ENCODE measurements at regions of chr10 and their contacts with region 1.

Region 1: GRCh38 chr10:103921750-103922195 is 3.8 kb upstream of the STN1 start:
- DNase-seq: no peak
- ATAC-seq: no peak
- H3K4me3 ChIP-seq: no peak overlapping the region
- H3K27ac ChIP-seq: no peak overlapping the region
- H3K4me1 ChIP-seq: peaks cover 13% of the 10 kb centered on the region
- H3K27me3 ChIP-seq: no peaks in the 10 kb centered on the region
- CTCF ChIP-seq: no peak

Region 2: GRCh38 chr10:103960103-103960502 is 38.3 kb after region 1 on chr10:
- intact Hi-C with region 1: loop called (anchors 2 kb)
- DNase-seq: no peak
- ATAC-seq: no peak
- H3K4me3 ChIP-seq: no peak overlapping the region
- H3K27ac ChIP-seq: no peak overlapping the region
- H3K4me1 ChIP-seq: peaks cover 14% of the 10 kb centered on the region
- H3K27me3 ChIP-seq: no peaks in the 10 kb centered on the region
- CTCF ChIP-seq: no peak

Region 3: DNA sequence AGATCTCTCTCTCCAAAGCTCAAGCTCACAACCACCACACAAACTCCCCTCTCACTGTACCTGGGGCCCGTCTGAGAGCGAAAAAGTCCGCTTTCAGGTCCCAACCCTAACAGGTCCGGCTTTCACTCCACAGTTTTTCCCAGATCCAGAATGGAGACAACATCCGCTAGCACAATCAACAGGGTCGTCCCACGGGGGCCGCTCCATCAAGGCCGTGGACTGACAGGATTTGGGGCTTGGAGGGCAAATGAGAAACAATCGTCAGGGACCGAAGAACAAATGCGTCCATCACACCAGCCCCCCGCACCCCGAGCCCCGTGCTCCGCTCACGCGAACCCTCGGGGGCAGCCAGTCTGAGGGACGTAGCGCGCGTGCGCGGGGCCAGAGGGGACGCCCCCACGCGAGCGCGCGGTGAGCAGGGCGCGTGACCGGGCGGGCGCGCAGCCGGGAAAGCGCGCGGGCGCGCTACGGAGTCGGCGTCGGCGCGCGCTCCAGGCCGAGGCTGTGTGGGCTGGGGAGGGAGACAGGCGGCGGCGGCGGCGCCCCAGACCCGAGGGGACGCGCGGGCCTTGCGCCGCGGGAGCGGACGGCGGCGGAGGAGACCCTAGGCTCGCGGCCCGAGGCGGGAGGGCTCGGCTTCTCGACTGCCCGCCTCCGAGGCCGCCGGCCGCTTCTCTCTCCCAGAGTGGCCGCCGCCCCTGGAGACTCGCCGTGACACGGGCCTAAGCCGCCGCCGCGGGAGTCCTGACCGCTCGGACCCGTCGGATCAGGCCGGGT is 45.1 kb after region 1 on chr10 and contains the start of gene SLK:
- intact Hi-C with region 1: loop called in 1 of 2 experiments (anchors 2 kb)
- DNase-seq: peak; percentile 89 to 93
- ATAC-seq: peak; percentile 96 to 98 (median 98)
- H3K4me3 ChIP-seq: peak within 1 kb of the TSS; percentile 97
- H3K27ac ChIP-seq: peak within 1 kb of the TSS; percentile 95
- H3K4me1 ChIP-seq: peaks cover 25% of the 10 kb centered on the region
- H3K27me3 ChIP-seq: no peaks in the 10 kb centered on the region
- CTCF ChIP-seq: no peak
- total RNA-seq, gene SLK: 36.6 to 48.6 (median 41.0) TPM

Measured in psoas muscle (tissue), 8 donors.